ENCODE measurements at regions of chr5 and their contacts with region 1.

Region 1: DNA sequence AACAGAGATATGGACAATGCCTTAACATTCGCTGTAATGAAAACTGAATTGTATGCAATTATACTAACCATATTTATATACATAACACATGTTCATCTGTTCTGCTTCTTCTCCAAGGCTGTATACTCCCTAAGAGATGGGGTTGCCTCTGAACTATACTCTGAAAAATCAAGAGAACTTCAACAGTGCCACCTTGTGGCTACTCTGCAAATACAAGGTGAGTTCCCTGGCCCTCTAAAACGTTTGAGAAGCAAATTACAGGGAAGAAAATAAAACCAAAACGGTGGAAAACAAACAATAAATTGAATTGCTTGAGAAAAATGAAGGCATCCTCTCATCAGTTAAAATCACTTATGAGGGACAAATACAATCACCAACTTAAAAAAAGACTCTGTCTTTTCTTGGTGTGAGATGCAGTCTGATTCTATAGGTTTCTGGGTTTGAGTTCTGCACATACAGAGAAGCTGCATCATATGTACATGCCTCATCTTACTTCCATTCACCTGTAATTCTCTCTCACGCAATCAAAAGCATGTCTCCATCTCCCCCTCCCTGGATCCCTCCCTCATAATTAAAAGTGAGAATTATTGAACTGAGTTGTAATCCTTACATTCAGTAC is 98.6 kb downstream of the FBXW11 start:
- DNase-seq: peak; percentile 37
- ATAC-seq: peak; percentile 86
- H3K4me3 ChIP-seq: no peak overlapping the region
- H3K27ac ChIP-seq: no peak overlapping the region
- H3K4me1 ChIP-seq: no peaks in the 10 kb centered on the region
- H3K27me3 ChIP-seq: no peaks in the 10 kb centered on the region
- CTCF ChIP-seq: peak; percentile 73 to 89 (median 83)
- POLR2A ChIP-seq: no peak
- RAD21 ChIP-seq: peak; percentile 80

Region 2: DNA sequence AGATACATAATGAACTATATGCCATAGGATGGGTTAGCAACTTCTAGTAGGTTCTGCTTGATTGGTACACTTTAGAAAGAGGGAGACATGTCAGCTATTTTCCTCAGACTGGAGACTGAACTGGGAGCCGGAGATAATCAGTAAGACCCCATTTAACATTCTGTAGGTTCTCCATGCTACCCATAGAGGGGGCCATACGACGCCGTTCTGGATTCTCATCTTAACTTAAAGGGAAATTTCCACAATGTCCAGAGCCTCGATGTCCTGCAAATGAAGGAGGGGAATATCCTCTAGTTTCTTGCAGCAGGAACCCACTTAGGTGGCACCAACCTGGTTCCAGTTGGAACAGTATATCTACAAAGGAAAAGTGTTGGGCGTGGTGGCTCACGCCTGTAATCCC is 542.5 kb before region 1 on chr5:
- CTCF ChIA-PET with region 1: no interaction called
- POLR2A ChIA-PET with region 1: no interaction called
- RAD21 ChIA-PET with region 1: no interaction called
- intact Hi-C with region 1: loop called (anchors 5 kb)
- DNase-seq: no peak
- ATAC-seq: peak; percentile 87
- H3K4me3 ChIP-seq: no peak overlapping the region
- H3K27ac ChIP-seq: no peak overlapping the region
- H3K4me1 ChIP-seq: peaks cover 4 to 9% of the 10 kb centered on the region in 2 experiments; a peak in 3 of 4 replicates
- H3K27me3 ChIP-seq: no peaks in the 10 kb centered on the region
- CTCF ChIP-seq: peak; percentile 49 to 83 (median 81); a peak in 5 of 6 replicates
- POLR2A ChIP-seq: no peak
- RAD21 ChIP-seq: peak; percentile 70

Region 3: DNA sequence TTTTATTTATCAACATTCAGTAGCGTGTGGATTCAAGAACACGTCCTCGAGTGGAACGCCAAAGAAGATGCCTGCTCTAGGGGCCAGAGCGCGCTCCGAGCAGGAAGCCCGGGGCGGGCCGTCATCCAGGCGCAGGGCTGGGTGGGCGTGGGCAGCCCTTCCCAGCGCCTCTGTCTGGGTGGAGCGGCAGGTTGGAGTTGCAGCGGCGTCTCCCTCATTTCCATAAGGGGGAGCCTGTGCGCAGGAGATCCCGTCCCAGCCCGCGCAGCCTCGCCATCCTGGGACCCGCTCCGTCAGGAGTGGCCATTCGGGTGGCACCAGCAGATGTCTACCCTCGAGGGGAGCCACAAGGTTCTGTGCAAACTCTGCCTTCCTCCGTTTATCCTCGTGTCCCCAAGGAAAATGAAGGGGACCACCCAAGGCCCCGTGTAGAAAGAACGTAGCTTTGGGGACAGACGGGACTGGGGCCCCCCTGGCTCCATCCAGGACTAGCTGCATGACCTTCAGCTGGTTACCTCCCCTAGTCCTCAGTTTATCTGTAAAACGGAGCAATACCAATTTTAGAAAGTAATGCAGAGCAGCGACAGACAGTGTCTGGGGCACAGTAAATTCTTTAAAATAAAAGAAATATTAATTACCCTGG is 277.7 kb before region 1 on chr5:
- CTCF ChIA-PET with region 1: no interaction called
- POLR2A ChIA-PET with region 1: no interaction called
- RAD21 ChIA-PET with region 1: no interaction called
- intact Hi-C with region 1: loop called (anchors 1 kb)
- DNase-seq: peak; percentile 41
- ATAC-seq: peak; percentile 100
- H3K4me3 ChIP-seq: peak overlapping the region; percentile 17 to 51
- H3K27ac ChIP-seq: no peak overlapping the region
- H3K4me1 ChIP-seq: peaks cover 0 to 14% of the 10 kb centered on the region in 2 experiments; a peak in 2 of 4 replicates
- H3K27me3 ChIP-seq: peaks cover 14% of the 10 kb centered on the region
- CTCF ChIP-seq: peak; percentile 49 to 71 (median 53)
- POLR2A ChIP-seq: no peak
- RAD21 ChIP-seq: peak; percentile 85

Region 4: DNA sequence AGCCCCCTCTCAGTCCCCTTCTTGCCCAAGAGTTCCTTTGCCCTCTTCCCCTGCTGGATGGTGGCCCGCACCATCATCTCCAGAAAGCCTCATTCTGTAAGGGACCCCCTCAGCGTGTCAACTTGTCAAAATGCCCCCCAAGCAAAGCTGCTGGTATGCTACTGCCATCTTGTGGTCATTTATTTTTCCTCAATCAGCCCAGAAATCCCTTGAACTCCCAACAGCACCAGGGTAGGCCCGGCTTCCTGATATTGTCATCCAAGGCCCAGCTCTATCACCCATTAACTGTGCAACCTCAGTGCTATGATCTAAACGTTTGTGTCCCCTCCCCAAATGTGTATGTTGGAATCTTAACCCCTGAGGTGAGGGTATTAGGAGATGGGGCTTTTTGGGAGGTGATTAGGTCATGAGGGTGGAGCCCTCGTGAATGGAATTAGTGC is 151.8 kb after region 1 on chr5:
- CTCF ChIA-PET with region 1: interaction called, 47 read pairs
- POLR2A ChIA-PET with region 1: no interaction called
- RAD21 ChIA-PET with region 1: interaction called in 1 of 2 experiments, 4 read pairs
- intact Hi-C with region 1: loop called (anchors 1 kb)
- DNase-seq: no peak
- ATAC-seq: peak; percentile 78
- H3K4me3 ChIP-seq: no peak overlapping the region
- H3K27ac ChIP-seq: no peak overlapping the region
- H3K4me1 ChIP-seq: no peaks in the 10 kb centered on the region
- H3K27me3 ChIP-seq: no peaks in the 10 kb centered on the region
- CTCF ChIP-seq: peak; percentile 42 to 72 (median 56); a peak in 5 of 6 replicates
- POLR2A ChIP-seq: no peak
- RAD21 ChIP-seq: peak; percentile 59

Region 5: DNA sequence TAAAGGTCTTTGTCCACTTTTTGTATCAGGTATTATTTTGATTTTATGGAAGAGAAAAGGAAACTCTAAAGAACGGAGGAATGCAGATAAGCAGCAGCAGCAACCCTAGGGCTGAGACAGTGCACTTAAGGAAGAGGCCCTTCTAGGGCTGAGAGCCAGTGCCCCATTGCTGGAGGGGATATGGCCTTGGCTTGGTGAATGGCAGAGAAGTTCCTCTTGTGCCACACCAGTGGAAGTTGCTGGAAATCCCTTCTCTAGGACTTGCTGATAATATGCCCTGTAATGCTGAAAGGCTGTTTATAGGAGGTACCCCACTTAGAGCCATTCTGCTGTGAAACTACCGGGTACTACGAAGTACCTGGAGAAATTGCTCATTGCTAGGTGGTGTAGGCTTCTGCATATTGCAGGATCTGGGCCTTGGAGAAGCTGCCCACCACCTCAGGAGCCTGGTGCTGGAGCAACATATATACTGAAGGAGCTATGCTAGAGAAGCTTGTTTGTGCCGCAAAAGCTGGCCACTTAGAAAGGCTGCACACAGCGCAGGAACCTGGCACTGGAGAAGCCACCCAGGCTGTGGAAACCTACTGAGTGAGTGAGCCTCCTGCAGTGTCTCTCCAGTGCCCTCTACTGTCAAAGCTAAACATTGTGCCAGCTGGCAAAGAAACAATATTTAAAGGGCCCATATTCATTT is 385.4 kb after region 1 on chr5:
- CTCF ChIA-PET with region 1: interaction called, 19 read pairs
- POLR2A ChIA-PET with region 1: no interaction called
- RAD21 ChIA-PET with region 1: no interaction called
- intact Hi-C with region 1: loop called (anchors 1 kb)
- DNase-seq: peak; percentile 63
- ATAC-seq: peak; percentile 97
- H3K4me3 ChIP-seq: no peak overlapping the region
- H3K27ac ChIP-seq: no peak overlapping the region
- H3K4me1 ChIP-seq: peaks cover 4 to 5% of the 10 kb centered on the region in 2 experiments; a peak in 2 of 4 replicates
- H3K27me3 ChIP-seq: no peaks in the 10 kb centered on the region
- CTCF ChIP-seq: peak; percentile 84 to 92 (median 92)
- POLR2A ChIP-seq: no peak
- RAD21 ChIP-seq: peak; percentile 96

Region 6: GRCh38 chr5:172412724-172413286 is 505.0 kb after region 1 on chr5:
- CTCF ChIA-PET with region 1: no interaction called
- POLR2A ChIA-PET with region 1: no interaction called
- RAD21 ChIA-PET with region 1: no interaction called
- intact Hi-C with region 1: no loop called
- DNase-seq: no peak
- ATAC-seq: no peak
- H3K4me3 ChIP-seq: no peak overlapping the region
- H3K27ac ChIP-seq: no peak overlapping the region
- H3K4me1 ChIP-seq: no peaks in the 10 kb centered on the region; a peak in 2 of 4 replicates
- H3K27me3 ChIP-seq: no peaks in the 10 kb centered on the region
- CTCF ChIP-seq: no peak
- POLR2A ChIP-seq: no peak
- RAD21 ChIP-seq: no peak